H1 (cell line): ENCODE measurements at regions of chr10 and their contacts with region 1.

Region 1: GRCh38 chr10:116120688-116121455 is 152.1 kb downstream of the GFRA1 start:
- DNase-seq: peak; percentile 33 to 91
- H3K4me3 ChIP-seq: no peak overlapping the region
- H3K27ac ChIP-seq: no peak overlapping the region
- H3K4me1 ChIP-seq: peaks cover 0 to 10% (median 3%) of the 10 kb centered on the region in 4 experiments; a peak in 3 of 7 replicates
- H3K27me3 ChIP-seq: peaks cover 0 to 7% (median 4%) of the 10 kb centered on the region in 4 experiments; a peak in 4 of 7 replicates
- CTCF ChIP-seq: peak; percentile 84 to 91 (median 87)
- EP300 ChIP-seq: no peak
- POLR2A ChIP-seq: no peak
- RAD21 ChIP-seq: peak; percentile 85 to 87

Region 2: GRCh38 chr10:115829521-115830205 is 291.2 kb before region 1 on chr10:
- CTCF ChIA-PET with region 1: interaction called, 11 read pairs
- POLR2A ChIA-PET with region 1: no interaction called
- DNase-seq: no peak
- H3K4me3 ChIP-seq: no peak overlapping the region
- H3K27ac ChIP-seq: no peak overlapping the region
- H3K4me1 ChIP-seq: no peaks in the 10 kb centered on the region
- H3K27me3 ChIP-seq: no peaks in the 10 kb centered on the region
- CTCF ChIP-seq: peak in 1 of 3 experiments; percentile 27; a peak in 2 of 4 replicates
- EP300 ChIP-seq: no peak
- POLR2A ChIP-seq: no peak
- RAD21 ChIP-seq: peak; percentile 48 to 53

Region 3: DNA sequence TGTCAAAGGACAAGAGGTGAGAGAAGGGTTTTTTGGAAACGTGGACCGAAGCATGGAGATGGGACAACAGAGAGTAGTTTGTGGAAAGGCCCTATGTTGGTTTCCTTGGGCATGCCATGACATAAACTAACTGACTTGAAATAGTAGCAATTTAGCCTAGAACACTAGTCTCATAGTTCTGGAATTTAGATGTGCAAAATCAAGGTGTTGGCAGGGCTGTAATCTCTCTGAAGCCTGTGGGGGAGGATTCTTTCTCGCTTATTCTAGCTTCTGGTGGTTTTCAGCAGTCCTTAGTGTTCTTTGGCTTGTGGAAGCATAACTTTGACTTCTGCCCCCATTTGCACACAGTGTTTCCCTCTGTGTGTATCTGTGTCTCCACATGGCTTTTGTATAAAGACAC is 131.3 kb before region 1 on chr10:
- CTCF ChIA-PET with region 1: no interaction called
- POLR2A ChIA-PET with region 1: no interaction called
- DNase-seq: no peak
- H3K4me3 ChIP-seq: no peak overlapping the region
- H3K27ac ChIP-seq: no peak overlapping the region
- H3K4me1 ChIP-seq: no peaks in the 10 kb centered on the region
- H3K27me3 ChIP-seq: peaks cover 6 to 19% (median 13%) of the 10 kb centered on the region in 4 experiments
- CTCF ChIP-seq: no peak
- EP300 ChIP-seq: no peak
- POLR2A ChIP-seq: no peak
- RAD21 ChIP-seq: no peak

Region 4: GRCh38 chr10:116069856-116070255 is 51.0 kb before region 1 on chr10:
- CTCF ChIA-PET with region 1: interaction called, 15 read pairs
- POLR2A ChIA-PET with region 1: interaction called, 3 read pairs
- DNase-seq: no peak
- H3K4me3 ChIP-seq: no peak overlapping the region
- H3K27ac ChIP-seq: no peak overlapping the region
- H3K4me1 ChIP-seq: peaks cover 2 to 9% (median 6%) of the 10 kb centered on the region in 4 experiments; a peak in 6 of 7 replicates
- H3K27me3 ChIP-seq: no peaks in the 10 kb centered on the region
- CTCF ChIP-seq: no peak
- EP300 ChIP-seq: no peak
- POLR2A ChIP-seq: no peak
- RAD21 ChIP-seq: no peak

Region 5: DNA sequence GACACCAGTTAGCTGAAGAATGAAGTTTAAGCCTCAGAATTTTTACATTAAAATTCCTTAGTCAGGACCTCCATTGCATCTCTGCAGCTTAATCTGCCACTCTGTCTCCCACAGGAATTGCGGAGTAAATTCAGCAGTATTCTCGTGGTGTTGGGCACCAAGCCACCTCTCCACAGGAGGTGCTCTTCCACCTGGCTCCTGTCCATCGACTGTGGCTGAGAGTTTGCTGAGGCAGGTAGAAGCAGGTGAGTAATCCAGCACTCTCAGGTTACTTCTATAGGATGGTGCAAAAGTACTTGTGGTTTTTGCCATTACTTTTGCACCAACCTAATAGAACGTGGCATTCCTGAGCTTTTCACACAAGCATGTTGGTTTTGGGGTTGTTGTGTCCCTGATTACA is 18.0 kb after region 1 on chr10:
- CTCF ChIA-PET with region 1: interaction called, 13 read pairs
- POLR2A ChIA-PET with region 1: no interaction called
- DNase-seq: no peak
- H3K4me3 ChIP-seq: no peak overlapping the region
- H3K27ac ChIP-seq: no peak overlapping the region
- H3K4me1 ChIP-seq: peaks cover 0 to 4% (median 0%) of the 10 kb centered on the region in 4 experiments; a peak in 2 of 7 replicates
- H3K27me3 ChIP-seq: no peaks in the 10 kb centered on the region
- CTCF ChIP-seq: no peak
- EP300 ChIP-seq: no peak
- POLR2A ChIP-seq: no peak
- RAD21 ChIP-seq: no peak

Region 6: DNA sequence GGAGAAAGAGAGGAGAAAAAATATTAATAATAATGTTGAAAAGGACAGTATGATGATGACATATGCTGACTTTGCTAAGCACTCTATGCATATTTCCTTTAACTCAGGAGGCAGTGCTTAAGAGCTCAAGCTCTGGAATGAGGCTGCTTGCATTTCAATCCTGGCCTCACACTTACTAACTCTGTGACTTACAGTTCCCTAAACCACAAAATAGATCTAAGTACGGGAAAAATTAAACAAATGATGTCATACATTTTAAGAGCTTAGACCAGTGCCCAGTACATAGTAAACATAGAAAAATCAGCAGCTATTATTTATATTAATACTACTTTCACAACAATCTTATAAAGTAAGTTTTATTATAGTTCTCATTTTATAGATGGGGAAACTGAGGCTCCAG is 90.8 kb after region 1 on chr10:
- CTCF ChIA-PET with region 1: no interaction called
- POLR2A ChIA-PET with region 1: no interaction called
- DNase-seq: no peak
- H3K4me3 ChIP-seq: no peak overlapping the region
- H3K27ac ChIP-seq: no peak overlapping the region
- H3K4me1 ChIP-seq: no peaks in the 10 kb centered on the region
- H3K27me3 ChIP-seq: no peaks in the 10 kb centered on the region
- CTCF ChIP-seq: no peak
- EP300 ChIP-seq: no peak
- POLR2A ChIP-seq: no peak
- RAD21 ChIP-seq: no peak

Region 7: DNA sequence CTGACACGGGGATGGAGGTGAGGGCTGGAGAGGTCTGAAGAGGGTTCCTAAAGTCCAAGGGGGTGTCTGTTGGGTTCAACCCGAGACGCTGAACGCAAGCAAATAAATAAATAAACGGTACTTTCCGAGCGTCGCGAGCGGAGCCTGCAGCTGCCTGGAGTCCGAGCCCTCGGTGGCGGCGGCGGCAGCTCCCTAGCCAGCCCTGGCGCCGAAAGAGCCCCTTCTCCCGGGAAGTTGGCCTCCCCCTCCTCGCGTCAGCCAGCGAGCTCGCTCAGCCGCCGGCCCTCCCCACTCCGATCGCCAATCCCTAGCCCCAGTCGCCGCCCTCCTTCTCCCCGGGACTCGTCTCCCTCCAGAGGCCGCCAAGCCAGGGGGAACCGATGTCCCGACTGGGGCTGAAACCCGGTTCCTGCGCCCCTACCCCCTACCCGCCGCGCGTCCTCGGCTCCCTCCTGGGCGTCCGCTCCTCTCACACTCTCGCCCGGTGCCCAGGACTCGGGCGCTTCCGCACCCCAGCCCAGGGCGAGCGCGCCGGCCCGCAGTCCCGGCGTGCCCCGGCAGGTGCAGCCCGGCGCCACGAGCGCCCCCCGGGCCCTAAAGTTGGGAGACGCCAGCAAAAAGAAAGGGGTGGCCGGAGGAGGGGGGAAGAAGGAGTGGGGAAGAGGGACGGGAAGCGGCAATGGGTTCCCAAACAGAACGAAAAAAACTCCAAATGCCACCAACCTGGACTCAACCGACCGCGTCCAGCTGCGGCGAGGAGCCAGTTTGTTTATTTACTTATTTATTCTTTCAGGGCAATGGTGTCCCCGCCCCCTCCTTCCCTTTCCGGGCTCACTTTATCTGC is 151.8 kb after region 1 on chr10 and contains the start of gene GFRA1:
- CTCF ChIA-PET with region 1: interaction called, 15 read pairs
- POLR2A ChIA-PET with region 1: no interaction called
- DNase-seq: peak in 1 of 2 experiments; percentile 82
- H3K4me3 ChIP-seq: peak within 1 kb of the TSS; percentile 45 to 77 (median 70)
- H3K27ac ChIP-seq: no peak within 1 kb of the TSS
- H3K4me1 ChIP-seq: peaks cover 0 to 7% (median 3%) of the 10 kb centered on the region in 4 experiments; a peak in 5 of 7 replicates
- H3K27me3 ChIP-seq: peaks cover 42 to 79% (median 74%) of the 10 kb centered on the region in 4 experiments
- CTCF ChIP-seq: peak in 1 of 3 experiments; percentile 18; a peak in 1 of 4 replicates
- EP300 ChIP-seq: no peak
- POLR2A ChIP-seq: no peak
- RAD21 ChIP-seq: no peak; a peak in 1 of 4 replicates
- total RNA-seq, gene GFRA1: 2.0 TPM in 2 replicates

Region 8: GRCh38 chr10:116385994-116386809 is 265.3 kb after region 1 on chr10:
- CTCF ChIA-PET with region 1: interaction called, 18 read pairs
- POLR2A ChIA-PET with region 1: no interaction called
- DNase-seq: no peak
- H3K4me3 ChIP-seq: no peak overlapping the region
- H3K27ac ChIP-seq: no peak overlapping the region
- H3K4me1 ChIP-seq: no peaks in the 10 kb centered on the region
- H3K27me3 ChIP-seq: no peaks in the 10 kb centered on the region
- CTCF ChIP-seq: peak in 1 of 3 experiments; percentile 54; a peak in 2 of 4 replicates
- EP300 ChIP-seq: no peak
- POLR2A ChIP-seq: no peak
- RAD21 ChIP-seq: peak; percentile 64 to 77